ENCODE measurements at regions of chr18 and their contacts with region 1.

Region 1: GRCh38 chr18:62324917-62325805 is at the start of gene TNFRSF11A:
- H3K4me3 Mint-ChIP-seq: peak within 1 kb of the TSS; percentile 76
- H3K27ac Mint-ChIP-seq: peak within 1 kb of the TSS; percentile 9
- H3K4me1 Mint-ChIP-seq: peaks cover 57% of the 10 kb centered on the region
- H3K27me3 Mint-ChIP-seq: peaks cover 71% of the 10 kb centered on the region

Region 2: DNA sequence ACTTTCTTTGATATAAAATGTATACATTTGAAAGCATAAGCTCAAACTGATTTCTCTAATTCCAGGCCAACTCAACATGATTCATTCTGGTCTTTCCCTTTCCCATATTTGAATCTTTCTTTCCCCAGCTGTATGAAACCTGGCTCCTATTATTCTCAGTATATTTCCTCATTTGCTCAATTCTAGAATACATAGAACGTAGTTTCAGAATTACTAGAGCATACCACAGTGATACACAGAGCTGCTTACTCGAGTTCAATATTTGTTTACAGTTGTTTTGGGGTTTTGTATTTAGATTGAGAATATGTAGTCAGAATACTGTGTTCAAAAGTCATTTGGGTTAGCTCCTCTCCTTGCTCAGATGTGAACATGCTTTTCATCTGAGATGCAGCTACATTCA is 42.9 kb after region 1 on chr18:
- intact Hi-C with region 1: loop called (anchors 5 kb)
- H3K4me3 Mint-ChIP-seq: no peak overlapping the region
- H3K27ac Mint-ChIP-seq: no peak overlapping the region
- H3K4me1 Mint-ChIP-seq: no peaks in the 10 kb centered on the region
- H3K27me3 Mint-ChIP-seq: peaks cover 25% of the 10 kb centered on the region

Region 3: GRCh38 chr18:62399781-62400308 is 74.7 kb after region 1 on chr18:
- intact Hi-C with region 1: no loop called
- H3K4me3 Mint-ChIP-seq: no peak overlapping the region
- H3K27ac Mint-ChIP-seq: no peak overlapping the region
- H3K4me1 Mint-ChIP-seq: peaks cover 21% of the 10 kb centered on the region
- H3K27me3 Mint-ChIP-seq: peaks cover 28% of the 10 kb centered on the region

Region 4: GRCh38 chr18:62505669-62506494 is 180.7 kb after region 1 on chr18:
- intact Hi-C with region 1: loop called (anchors 5 kb)
- H3K4me3 Mint-ChIP-seq: peak overlapping the region; percentile 56
- H3K27ac Mint-ChIP-seq: peak overlapping the region; percentile 12
- H3K4me1 Mint-ChIP-seq: peaks cover 25% of the 10 kb centered on the region
- H3K27me3 Mint-ChIP-seq: peaks cover 2% of the 10 kb centered on the region

Measured in dendritic cell treated with granulocyte-macrophage colony-stimulating factor and Interleukin-4, amounts not matched to agents 40 ng/mL and 50 ng/mL, for 4 days (primary cell).